ENCODE measurements at regions of chr11 and their contacts with region 1.

Region 1: GRCh38 chr11:44611687-44612434 is 46.4 kb downstream of the CD82 start:
- DNase-seq: peak; percentile 74
- H3K4me3 Mint-ChIP-seq: peak overlapping the region; percentile 28
- H3K27ac Mint-ChIP-seq: peak overlapping the region; percentile 80
- H3K4me1 Mint-ChIP-seq: peaks cover 82% of the 10 kb centered on the region
- H3K27me3 Mint-ChIP-seq: no peaks in the 10 kb centered on the region

Region 2: GRCh38 chr11:44524751-44525201 is 87.1 kb before region 1 on chr11:
- CTCF ChIA-PET with region 1: interaction called, 13 read pairs
- POLR2A ChIA-PET with region 1: no interaction called
- DNase-seq: no peak
- H3K4me3 Mint-ChIP-seq: no peak overlapping the region
- H3K27ac Mint-ChIP-seq: no peak overlapping the region
- H3K4me1 Mint-ChIP-seq: peaks cover 11% of the 10 kb centered on the region
- H3K27me3 Mint-ChIP-seq: peaks cover 5% of the 10 kb centered on the region

Region 3: DNA sequence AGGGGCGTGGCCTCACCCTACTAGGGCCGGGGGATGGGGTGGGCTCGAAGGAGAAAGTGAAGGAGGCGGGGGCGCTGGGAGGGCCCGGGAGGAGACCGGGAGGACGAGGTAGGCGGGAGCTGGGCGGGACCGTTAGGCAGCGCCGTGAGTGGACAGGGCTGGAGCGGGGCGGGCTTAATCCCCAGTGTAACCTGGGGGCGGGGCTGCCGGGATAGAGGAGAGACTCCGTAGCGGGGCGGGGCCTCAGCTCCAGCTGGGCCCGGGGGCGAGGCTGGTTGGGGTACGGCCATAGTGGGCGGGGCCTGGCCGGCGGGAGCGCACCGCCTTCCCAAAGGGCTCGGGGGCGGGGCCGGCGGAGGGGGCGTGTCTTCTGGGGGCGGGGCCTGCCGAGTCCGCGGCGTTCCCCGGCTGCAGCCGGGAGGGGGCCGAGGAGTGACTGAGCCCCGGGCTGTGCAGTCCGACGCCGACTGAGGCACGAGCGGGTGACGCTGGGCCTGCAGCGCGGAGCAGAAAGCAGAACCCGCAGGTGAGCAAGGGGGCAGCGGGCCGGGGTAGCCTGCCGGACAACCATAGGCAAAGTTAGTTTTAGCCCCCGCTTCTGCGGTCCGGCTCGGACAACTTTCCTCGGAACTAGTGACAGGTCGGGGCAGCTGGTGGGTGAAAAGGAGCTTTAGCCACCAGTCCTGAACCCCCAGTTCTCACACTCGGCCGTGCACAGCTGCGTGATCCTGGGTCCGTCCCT is 46.5 kb before region 1 on chr11 and contains the start of gene CD82:
- CTCF ChIA-PET with region 1: interaction called, 28 read pairs
- POLR2A ChIA-PET with region 1: interaction called, 4 read pairs
- DNase-seq: peak; percentile 97
- H3K4me3 Mint-ChIP-seq: peak within 1 kb of the TSS; percentile 86
- H3K27ac Mint-ChIP-seq: peak within 1 kb of the TSS; percentile 80
- H3K4me1 Mint-ChIP-seq: peaks cover 75% of the 10 kb centered on the region
- H3K27me3 Mint-ChIP-seq: no peaks in the 10 kb centered on the region
- total RNA-seq, gene CD82: 126 to 128 TPM

Region 4: GRCh38 chr11:44596525-44597276 is 15.2 kb before region 1 on chr11:
- CTCF ChIA-PET with region 1: interaction called, 11 read pairs
- POLR2A ChIA-PET with region 1: no interaction called
- DNase-seq: peak; percentile 84
- H3K4me3 Mint-ChIP-seq: peak overlapping the region; percentile 52
- H3K27ac Mint-ChIP-seq: peak overlapping the region; percentile 96
- H3K4me1 Mint-ChIP-seq: peaks cover 72% of the 10 kb centered on the region
- H3K27me3 Mint-ChIP-seq: no peaks in the 10 kb centered on the region

Region 5: GRCh38 chr11:44651535-44652155 is 39.8 kb after region 1 on chr11:
- CTCF ChIA-PET with region 1: no interaction called
- POLR2A ChIA-PET with region 1: no interaction called
- DNase-seq: no peak
- H3K4me3 Mint-ChIP-seq: no peak overlapping the region
- H3K27ac Mint-ChIP-seq: no peak overlapping the region
- H3K4me1 Mint-ChIP-seq: no peaks in the 10 kb centered on the region
- H3K27me3 Mint-ChIP-seq: peaks cover 44% of the 10 kb centered on the region

Region 6: DNA sequence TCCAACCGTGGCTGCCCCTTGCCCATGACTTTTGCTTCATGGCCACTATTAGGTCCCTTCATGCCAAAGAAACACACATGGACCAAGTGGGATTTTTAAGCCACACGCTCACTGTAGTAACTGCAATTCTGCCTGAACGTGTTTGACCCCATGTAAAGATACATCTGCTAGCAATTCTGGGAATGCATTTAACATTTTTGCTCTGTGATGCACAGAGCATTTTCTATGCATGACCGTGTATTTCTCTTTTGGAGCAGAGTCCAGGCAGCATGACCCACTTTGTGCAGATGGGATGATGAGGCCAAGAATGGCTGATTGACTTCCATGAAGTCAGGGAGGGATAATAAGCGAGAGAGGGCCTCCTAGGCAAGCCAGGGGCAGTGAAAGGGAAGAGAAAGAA is 230.4 kb after region 1 on chr11:
- CTCF ChIA-PET with region 1: no interaction called
- POLR2A ChIA-PET with region 1: no interaction called
- DNase-seq: no peak
- H3K4me3 Mint-ChIP-seq: no peak overlapping the region
- H3K27ac Mint-ChIP-seq: no peak overlapping the region
- H3K4me1 Mint-ChIP-seq: no peaks in the 10 kb centered on the region
- H3K27me3 Mint-ChIP-seq: peaks cover 14% of the 10 kb centered on the region